ENCODE measurements at regions of chr14 and their contacts with region 1.

Region 1: DNA sequence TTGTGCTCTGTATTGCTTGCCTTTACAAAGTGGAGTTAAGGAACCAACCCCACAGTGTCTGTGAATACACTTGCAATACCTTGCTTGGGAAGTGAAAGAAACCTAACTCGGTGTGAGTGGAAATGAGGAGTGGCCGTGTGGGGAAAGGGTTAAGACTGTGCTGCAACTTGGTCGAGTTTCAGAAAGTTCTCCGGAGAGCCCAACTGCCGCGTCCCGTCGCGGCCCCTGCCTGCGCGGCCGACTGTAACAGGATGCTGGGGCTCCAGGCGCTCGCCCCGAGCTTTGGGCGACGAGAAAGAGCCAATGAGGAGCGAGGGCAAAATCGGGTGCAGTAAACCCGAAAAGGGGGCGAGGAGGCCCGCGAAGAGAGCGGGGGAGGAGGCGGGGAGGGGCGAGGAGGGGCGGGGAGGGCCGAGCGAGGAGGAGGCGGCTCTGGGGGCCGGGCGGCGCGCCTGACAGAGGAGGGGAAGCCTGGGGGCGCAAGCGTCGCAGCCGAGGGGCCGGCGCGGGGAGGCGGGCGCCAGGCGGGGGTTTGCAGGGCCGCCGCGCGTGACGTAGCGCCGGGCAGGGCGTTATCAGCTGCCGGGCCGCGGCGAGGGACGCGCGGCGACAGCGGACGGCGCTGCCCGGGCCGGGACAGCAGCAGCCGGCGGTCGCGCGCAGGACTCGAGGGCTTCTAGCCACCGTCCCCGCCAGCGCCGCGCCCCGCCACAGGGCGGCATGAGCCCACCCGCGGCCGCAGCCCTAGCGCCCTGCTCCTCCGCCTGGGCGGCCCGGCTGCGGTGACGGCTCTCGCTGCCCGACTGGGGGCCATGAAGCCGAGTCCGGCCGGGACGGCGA is at the start of gene DACT1:
- DNase-seq: no peak
- ATAC-seq: peak; percentile 63
- H3K4me3 ChIP-seq: peak within 1 kb of the TSS; percentile 56; the same call in 1 of the 2 replicates
- H3K27ac ChIP-seq: no peak within 1 kb of the TSS
- H3K4me1 ChIP-seq: peaks cover 9% of the 10 kb centered on the region
- H3K27me3 ChIP-seq: peaks cover 0 to 8% of the 10 kb centered on the region in 2 experiments; a peak in 2 of 4 replicates
- CTCF ChIP-seq: no peak
- EP300 ChIP-seq: no peak
- POLR2A ChIP-seq: peak; percentile 49; the same call in 1 of the 2 replicates
- RAD21 ChIP-seq: no peak
- polyA plus RNA-seq, gene DACT1: 0.16 to 0.27 TPM

Region 2: DNA sequence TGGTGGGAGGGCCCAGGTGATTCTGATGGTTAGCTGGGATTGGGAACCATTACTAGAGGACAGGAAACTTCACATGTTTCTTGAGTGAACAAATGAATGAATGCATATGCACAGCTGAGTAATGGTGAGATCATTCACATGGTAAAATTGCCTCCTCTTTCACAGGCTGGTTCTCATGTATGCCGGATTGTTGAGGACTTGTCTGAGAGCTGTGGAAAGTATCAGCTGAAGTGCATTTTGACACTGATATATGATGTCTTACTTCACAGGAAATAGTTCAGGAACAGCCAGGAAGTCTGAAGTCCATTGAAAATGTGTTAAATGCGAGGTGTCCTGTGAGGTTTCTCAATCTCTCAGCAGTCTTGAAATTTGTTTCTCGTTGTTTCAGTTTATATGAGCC is 77.4 kb before region 1 on chr14:
- CTCF ChIA-PET with region 1: interaction called, 3 read pairs
- POLR2A ChIA-PET with region 1: no interaction called
- RAD21 ChIA-PET with region 1: interaction called, 4 read pairs
- SMC1A ChIA-PET with region 1: interaction called, 3 read pairs
- in situ Hi-C with region 1: no loop called
- intact Hi-C with region 1: loop called (anchors 5 kb)
- DNase-seq: no peak
- ATAC-seq: peak; percentile 32; the same call in 2 of the 3 replicates
- H3K4me3 ChIP-seq: no peak overlapping the region
- H3K27ac ChIP-seq: no peak overlapping the region
- H3K4me1 ChIP-seq: no peaks in the 10 kb centered on the region
- H3K27me3 ChIP-seq: no peaks in the 10 kb centered on the region
- CTCF ChIP-seq: no peak
- EP300 ChIP-seq: no peak
- POLR2A ChIP-seq: no peak
- RAD21 ChIP-seq: no peak

Region 3: GRCh38 chr14:58731465-58732330 is 94.1 kb after region 1 on chr14:
- CTCF ChIA-PET with region 1: interaction called, 3 read pairs
- POLR2A ChIA-PET with region 1: no interaction called
- RAD21 ChIA-PET with region 1: interaction called, 6 read pairs
- SMC1A ChIA-PET with region 1: interaction called, 40 read pairs
- in situ Hi-C with region 1: no loop called
- intact Hi-C with region 1: loop called (anchors 5 kb)
- DNase-seq: no peak
- ATAC-seq: no peak
- H3K4me3 ChIP-seq: no peak overlapping the region
- H3K27ac ChIP-seq: no peak overlapping the region
- H3K4me1 ChIP-seq: no peaks in the 10 kb centered on the region
- H3K27me3 ChIP-seq: no peaks in the 10 kb centered on the region
- CTCF ChIP-seq: no peak
- EP300 ChIP-seq: no peak
- POLR2A ChIP-seq: no peak
- RAD21 ChIP-seq: no peak

Region 4: GRCh38 chr14:58808828-58809227 is 171.2 kb after region 1 on chr14:
- CTCF ChIA-PET with region 1: interaction called, 7 read pairs
- POLR2A ChIA-PET with region 1: no interaction called
- RAD21 ChIA-PET with region 1: no interaction called
- SMC1A ChIA-PET with region 1: interaction called, 18 read pairs
- in situ Hi-C with region 1: no loop called
- intact Hi-C with region 1: no loop called
- DNase-seq: no peak
- ATAC-seq: no peak
- H3K4me3 ChIP-seq: no peak overlapping the region
- H3K27ac ChIP-seq: no peak overlapping the region
- H3K4me1 ChIP-seq: no peaks in the 10 kb centered on the region
- H3K27me3 ChIP-seq: no peaks in the 10 kb centered on the region
- CTCF ChIP-seq: no peak
- EP300 ChIP-seq: no peak
- POLR2A ChIP-seq: no peak
- RAD21 ChIP-seq: no peak

Region 5: GRCh38 chr14:58954901-58955861 is 317.6 kb after region 1 on chr14:
- CTCF ChIA-PET with region 1: interaction called, 8 read pairs
- POLR2A ChIA-PET with region 1: no interaction called
- RAD21 ChIA-PET with region 1: interaction called, 9 read pairs
- SMC1A ChIA-PET with region 1: interaction called, 10 read pairs
- in situ Hi-C with region 1: no loop called
- intact Hi-C with region 1: loop called (anchors 2 kb)
- DNase-seq: peak; percentile 55
- ATAC-seq: peak; percentile 81
- H3K4me3 ChIP-seq: peak overlapping the region; percentile 38; the same call in 1 of the 2 replicates
- H3K27ac ChIP-seq: peak overlapping the region; percentile 86
- H3K4me1 ChIP-seq: peaks cover 18% of the 10 kb centered on the region
- H3K27me3 ChIP-seq: no peaks in the 10 kb centered on the region
- CTCF ChIP-seq: no peak
- EP300 ChIP-seq: peak; percentile 68 to 77; a peak in 3 of 4 replicates
- POLR2A ChIP-seq: no peak
- RAD21 ChIP-seq: no peak

Region 6: GRCh38 chr14:59028476-59029202 is 391.0 kb after region 1 on chr14:
- CTCF ChIA-PET with region 1: interaction called, 33 read pairs
- POLR2A ChIA-PET with region 1: interaction called, 3 read pairs
- RAD21 ChIA-PET with region 1: interaction called, 8 read pairs
- SMC1A ChIA-PET with region 1: interaction called, 13 read pairs
- in situ Hi-C with region 1: no loop called
- intact Hi-C with region 1: loop called (anchors 1 kb)
- DNase-seq: peak; percentile 31
- ATAC-seq: peak; percentile 100
- H3K4me3 ChIP-seq: no peak overlapping the region
- H3K27ac ChIP-seq: no peak overlapping the region
- H3K4me1 ChIP-seq: no peaks in the 10 kb centered on the region
- H3K27me3 ChIP-seq: no peaks in the 10 kb centered on the region
- CTCF ChIP-seq: peak; percentile 88 to 94 (median 91)
- EP300 ChIP-seq: no peak
- POLR2A ChIP-seq: no peak
- RAD21 ChIP-seq: peak; percentile 85

Region 7: DNA sequence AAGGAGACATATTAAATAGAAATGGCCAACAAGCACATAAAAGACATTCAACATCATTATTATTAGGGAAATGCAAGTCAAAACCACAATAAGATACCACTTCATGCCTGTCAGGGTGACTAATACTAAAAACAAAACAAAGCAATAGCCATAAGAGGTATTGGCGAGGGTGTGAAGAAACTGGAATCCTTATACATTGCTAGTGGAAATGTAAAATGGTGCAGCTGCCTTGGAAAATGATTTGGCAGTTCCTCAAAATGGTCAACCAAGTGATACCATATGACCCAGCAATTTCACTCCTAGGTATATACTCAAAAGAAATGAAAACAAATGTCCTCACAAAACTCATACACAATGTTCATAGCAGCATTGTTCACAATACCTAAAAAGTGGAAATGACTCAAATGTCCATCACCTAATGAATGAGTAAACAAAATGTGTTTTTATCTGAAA is 800.6 kb after region 1 on chr14:
- CTCF ChIA-PET with region 1: no interaction called
- POLR2A ChIA-PET with region 1: no interaction called
- RAD21 ChIA-PET with region 1: no interaction called
- SMC1A ChIA-PET with region 1: no interaction called
- in situ Hi-C with region 1: no loop called
- intact Hi-C with region 1: loop called (anchors 5 kb)
- DNase-seq: no peak
- ATAC-seq: peak; percentile 50
- H3K4me3 ChIP-seq: no peak overlapping the region
- H3K27ac ChIP-seq: no peak overlapping the region
- H3K4me1 ChIP-seq: no peaks in the 10 kb centered on the region
- H3K27me3 ChIP-seq: no peaks in the 10 kb centered on the region
- CTCF ChIP-seq: no peak
- EP300 ChIP-seq: no peak
- POLR2A ChIP-seq: no peak
- RAD21 ChIP-seq: no peak

Measured in GM12878 (cell line).